ENCODE measurements at regions of chr4 and their contacts with region 1.

Region 1: DNA sequence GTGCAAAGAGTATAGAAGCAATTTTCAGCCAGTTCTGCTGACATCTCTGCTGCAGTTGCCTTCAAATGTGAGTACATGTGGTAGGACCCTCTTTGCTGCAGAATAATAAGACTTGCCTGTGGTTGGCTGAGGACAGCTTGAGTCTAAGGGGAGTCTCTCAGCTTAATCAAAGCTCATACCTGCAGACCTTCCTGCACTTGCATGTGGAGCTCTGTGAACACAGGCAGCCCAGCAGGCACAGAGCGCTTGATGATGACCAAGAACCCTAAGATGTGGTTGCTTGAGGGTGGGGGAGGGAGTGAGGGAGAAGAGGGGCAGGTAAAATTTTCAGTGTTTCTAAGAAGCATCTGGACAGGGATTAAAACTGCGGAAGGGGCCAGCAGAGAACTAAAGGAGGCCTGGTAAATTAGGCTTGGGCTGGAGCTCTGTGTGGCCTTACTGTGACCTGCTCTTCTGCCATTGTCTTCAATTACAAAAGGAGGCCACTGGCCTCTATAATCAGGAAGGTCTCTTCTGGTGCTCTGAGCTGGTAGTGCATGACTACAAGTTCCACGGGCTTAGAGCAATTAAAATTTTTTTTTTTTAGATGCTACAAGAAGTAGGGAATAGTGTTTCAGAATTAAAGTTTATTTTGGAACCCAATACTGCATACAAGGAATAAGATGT is 59.9 kb upstream of the CHRNA9 start:
- DNase-seq: no peak
- ATAC-seq: no peak
- H3K4me3 ChIP-seq: no peak overlapping the region
- H3K4me3 Mint-ChIP-seq: peak overlapping the region; percentile 54
- H3K27ac ChIP-seq: no peak overlapping the region
- H3K27ac Mint-ChIP-seq: peak overlapping the region; percentile 10
- H3K4me1 ChIP-seq: peaks cover 20% of the 10 kb centered on the region
- H3K4me1 Mint-ChIP-seq: peaks cover 52% of the 10 kb centered on the region
- H3K27me3 ChIP-seq: no peaks in the 10 kb centered on the region
- H3K27me3 Mint-ChIP-seq: no peaks in the 10 kb centered on the region
- CTCF ChIP-seq: no peak

Region 2: GRCh38 chr4:40289366-40290188 is 14.4 kb after region 1 on chr4:
- CTCF ChIA-PET with region 1: interaction called, 3 read pairs
- POLR2A ChIA-PET with region 1: interaction called, 12 read pairs
- intact Hi-C with region 1: no loop called
- DNase-seq: peak in 5 of 14 experiments; percentile 31 to 70 (median 59)
- ATAC-seq: peak; percentile 88
- H3K4me3 ChIP-seq: peak overlapping the region; percentile 8
- H3K4me3 Mint-ChIP-seq: peak overlapping the region; percentile 50
- H3K27ac ChIP-seq: peak overlapping the region; percentile 39 to 62
- H3K27ac Mint-ChIP-seq: peak overlapping the region; percentile 85
- H3K4me1 ChIP-seq: peaks cover 49% of the 10 kb centered on the region
- H3K4me1 Mint-ChIP-seq: peaks cover 74% of the 10 kb centered on the region
- H3K27me3 ChIP-seq: no peaks in the 10 kb centered on the region
- H3K27me3 Mint-ChIP-seq: no peaks in the 10 kb centered on the region
- CTCF ChIP-seq: no peak

Region 3: GRCh38 chr4:40423735-40424134 is 148.5 kb after region 1 on chr4:
- CTCF ChIA-PET with region 1: no interaction called
- POLR2A ChIA-PET with region 1: no interaction called
- intact Hi-C with region 1: no loop called
- DNase-seq: no peak
- ATAC-seq: no peak
- H3K4me3 ChIP-seq: no peak overlapping the region
- H3K4me3 Mint-ChIP-seq: no peak overlapping the region
- H3K27ac ChIP-seq: no peak overlapping the region
- H3K27ac Mint-ChIP-seq: no peak overlapping the region
- H3K4me1 ChIP-seq: no peaks in the 10 kb centered on the region
- H3K4me1 Mint-ChIP-seq: no peaks in the 10 kb centered on the region
- H3K27me3 ChIP-seq: no peaks in the 10 kb centered on the region
- H3K27me3 Mint-ChIP-seq: no peaks in the 10 kb centered on the region
- CTCF ChIP-seq: no peak

Region 4: GRCh38 chr4:40722576-40723161 is 447.5 kb after region 1 on chr4:
- CTCF ChIA-PET with region 1: no interaction called
- POLR2A ChIA-PET with region 1: no interaction called
- intact Hi-C with region 1: no loop called
- DNase-seq: peak in 7 of 14 experiments; percentile 9 to 53 (median 38)
- ATAC-seq: peak; percentile 67
- H3K4me3 ChIP-seq: no peak overlapping the region
- H3K4me3 Mint-ChIP-seq: no peak overlapping the region
- H3K27ac ChIP-seq: no peak overlapping the region
- H3K27ac Mint-ChIP-seq: no peak overlapping the region
- H3K4me1 ChIP-seq: peaks cover 15% of the 10 kb centered on the region
- H3K4me1 Mint-ChIP-seq: no peaks in the 10 kb centered on the region
- H3K27me3 ChIP-seq: no peaks in the 10 kb centered on the region
- H3K27me3 Mint-ChIP-seq: no peaks in the 10 kb centered on the region
- CTCF ChIP-seq: no peak